B cell (primary cell): ENCODE measurements at regions of chr6 and their contacts with region 1.

Region 1: GRCh38 chr6:108432792-108433191 is 127.9 kb upstream of the FOXO3 start:
- DNase-seq: no peak
- ATAC-seq: no peak
- H3K4me3 ChIP-seq: no peak overlapping the region
- H3K4me3 Mint-ChIP-seq: no peak overlapping the region
- H3K27ac ChIP-seq: no peak overlapping the region
- H3K27ac Mint-ChIP-seq: no peak overlapping the region
- H3K4me1 ChIP-seq: no peaks in the 10 kb centered on the region
- H3K4me1 Mint-ChIP-seq: no peaks in the 10 kb centered on the region
- H3K27me3 ChIP-seq: no peaks in the 10 kb centered on the region
- H3K27me3 Mint-ChIP-seq: no peaks in the 10 kb centered on the region
- CTCF ChIP-seq: no peak

Region 2: DNA sequence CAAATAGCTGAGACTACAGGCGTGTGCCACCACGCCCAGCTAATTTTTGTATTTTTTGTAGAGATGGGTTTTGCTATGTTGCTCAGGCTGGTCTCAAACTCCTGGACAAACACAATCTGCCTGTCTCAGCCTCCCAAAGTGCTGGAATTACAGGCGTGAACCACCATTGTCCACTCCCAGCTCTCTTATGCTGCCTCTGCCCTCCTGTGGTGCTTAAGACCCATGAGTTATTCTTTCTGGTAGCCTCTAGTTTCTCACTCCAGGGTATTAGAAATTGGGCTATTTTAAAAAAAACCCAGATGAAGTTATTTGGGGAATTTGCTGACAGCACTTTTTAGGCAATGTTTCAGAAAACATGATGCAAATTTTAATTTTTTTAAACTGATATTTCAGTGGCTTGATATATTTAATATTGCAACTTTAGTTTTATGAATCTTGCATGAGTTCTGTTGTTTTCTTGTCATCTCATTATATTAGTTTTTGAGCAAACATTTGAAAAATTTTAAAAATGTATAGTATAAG is 13.9 kb after region 1 on chr6:
- CTCF ChIA-PET with region 1: no interaction called
- POLR2A ChIA-PET with region 1: interaction called, 10 read pairs
- intact Hi-C with region 1: no loop called
- DNase-seq: no peak
- ATAC-seq: no peak
- H3K4me3 ChIP-seq: no peak overlapping the region
- H3K4me3 Mint-ChIP-seq: no peak overlapping the region
- H3K27ac ChIP-seq: no peak overlapping the region
- H3K27ac Mint-ChIP-seq: no peak overlapping the region
- H3K4me1 ChIP-seq: peaks cover 11 to 20% of the 10 kb centered on the region in 2 donors
- H3K4me1 Mint-ChIP-seq: peaks cover 17% of the 10 kb centered on the region
- H3K27me3 ChIP-seq: no peaks in the 10 kb centered on the region
- H3K27me3 Mint-ChIP-seq: no peaks in the 10 kb centered on the region
- CTCF ChIP-seq: no peak